Panc1 (cell line): ENCODE measurements at regions of chr11 and their contacts with region 1.

Region 1: GRCh38 chr11:84355911-84356310 is 1069.7 kb upstream of the CCDC90B start:
- DNase-seq: no peak
- ATAC-seq: no peak
- H3K4me3 ChIP-seq: no peak overlapping the region
- H3K27ac ChIP-seq: no peak overlapping the region
- H3K4me1 ChIP-seq: no peaks in the 10 kb centered on the region
- H3K27me3 ChIP-seq: no peaks in the 10 kb centered on the region
- CTCF ChIP-seq: no peak

Region 2: GRCh38 chr11:83628622-83629355 is 727.1 kb before region 1 on chr11:
- CTCF ChIA-PET with region 1: no interaction called
- POLR2A ChIA-PET with region 1: no interaction called
- in situ Hi-C with region 1: no loop called
- intact Hi-C with region 1: no loop called
- DNase-seq: no peak
- ATAC-seq: no peak
- H3K4me3 ChIP-seq: no peak overlapping the region
- H3K27ac ChIP-seq: no peak overlapping the region
- H3K4me1 ChIP-seq: no peaks in the 10 kb centered on the region
- H3K27me3 ChIP-seq: no peaks in the 10 kb centered on the region; the same call in 1 of the 2 replicates
- CTCF ChIP-seq: no peak

Region 3: GRCh38 chr11:84372381-84372950 is 16.6 kb after region 1 on chr11:
- CTCF ChIA-PET with region 1: no interaction called
- POLR2A ChIA-PET with region 1: interaction called, 12 read pairs
- in situ Hi-C with region 1: no loop called
- intact Hi-C with region 1: no loop called
- DNase-seq: no peak
- ATAC-seq: no peak
- H3K4me3 ChIP-seq: no peak overlapping the region
- H3K27ac ChIP-seq: no peak overlapping the region
- H3K4me1 ChIP-seq: no peaks in the 10 kb centered on the region
- H3K27me3 ChIP-seq: no peaks in the 10 kb centered on the region
- CTCF ChIP-seq: no peak

Region 4: DNA sequence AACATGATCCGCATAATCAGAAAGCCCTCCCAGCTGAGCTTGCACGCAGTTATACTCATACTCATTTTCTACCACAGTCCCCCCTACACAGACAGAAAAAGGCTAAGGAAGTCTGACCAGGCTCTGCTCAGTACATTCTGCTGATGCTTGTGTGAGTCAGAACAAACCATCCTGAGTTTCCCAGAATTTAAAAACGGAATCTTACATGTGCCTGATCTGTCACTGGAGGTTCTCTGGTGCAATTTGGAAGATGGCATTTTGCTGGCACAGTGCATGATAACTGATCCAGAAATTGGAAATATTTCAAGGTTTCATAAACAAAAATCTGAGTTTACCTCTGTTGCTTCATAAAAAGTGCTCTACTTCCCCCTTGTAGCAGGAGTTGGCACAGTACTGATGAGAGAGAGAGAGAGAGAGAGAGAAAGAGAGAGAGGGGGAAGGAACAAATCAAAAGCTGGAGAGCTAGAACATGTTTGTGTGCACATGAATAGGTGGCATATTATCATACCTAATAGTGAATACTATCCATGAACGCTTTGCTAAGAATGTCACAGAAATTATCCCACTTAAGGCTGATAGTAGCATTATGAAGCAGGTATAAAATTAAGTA is 185.9 kb after region 1 on chr11:
- CTCF ChIA-PET with region 1: no interaction called
- POLR2A ChIA-PET with region 1: no interaction called
- in situ Hi-C with region 1: no loop called
- intact Hi-C with region 1: no loop called
- DNase-seq: no peak
- ATAC-seq: no peak
- H3K4me3 ChIP-seq: no peak overlapping the region
- H3K27ac ChIP-seq: no peak overlapping the region
- H3K4me1 ChIP-seq: no peaks in the 10 kb centered on the region
- H3K27me3 ChIP-seq: peaks cover 3% of the 10 kb centered on the region; the same call in 1 of the 2 replicates
- CTCF ChIP-seq: no peak